Activated CD8-positive, alpha-beta T cell treated with anti-CD3 and anti-CD28 coated beads, Interleukin-2, amount 10 ng/mL, durations not matched to agents 7 days and 5 days (primary cell): ENCODE measurements at regions of chr11 and their contacts with region 1.

Region 1: GRCh38 chr11:66081505-66081904 is 11.4 kb downstream of the PACS1 start:
- DNase-seq: peak; percentile 89
- ATAC-seq: peak; percentile 94
- H3K4me3 Mint-ChIP-seq: peak overlapping the region; percentile 84
- H3K27ac Mint-ChIP-seq: peak overlapping the region; percentile 98
- H3K4me1 Mint-ChIP-seq: peaks cover 67% of the 10 kb centered on the region
- H3K27me3 Mint-ChIP-seq: no peaks in the 10 kb centered on the region

Region 2: DNA sequence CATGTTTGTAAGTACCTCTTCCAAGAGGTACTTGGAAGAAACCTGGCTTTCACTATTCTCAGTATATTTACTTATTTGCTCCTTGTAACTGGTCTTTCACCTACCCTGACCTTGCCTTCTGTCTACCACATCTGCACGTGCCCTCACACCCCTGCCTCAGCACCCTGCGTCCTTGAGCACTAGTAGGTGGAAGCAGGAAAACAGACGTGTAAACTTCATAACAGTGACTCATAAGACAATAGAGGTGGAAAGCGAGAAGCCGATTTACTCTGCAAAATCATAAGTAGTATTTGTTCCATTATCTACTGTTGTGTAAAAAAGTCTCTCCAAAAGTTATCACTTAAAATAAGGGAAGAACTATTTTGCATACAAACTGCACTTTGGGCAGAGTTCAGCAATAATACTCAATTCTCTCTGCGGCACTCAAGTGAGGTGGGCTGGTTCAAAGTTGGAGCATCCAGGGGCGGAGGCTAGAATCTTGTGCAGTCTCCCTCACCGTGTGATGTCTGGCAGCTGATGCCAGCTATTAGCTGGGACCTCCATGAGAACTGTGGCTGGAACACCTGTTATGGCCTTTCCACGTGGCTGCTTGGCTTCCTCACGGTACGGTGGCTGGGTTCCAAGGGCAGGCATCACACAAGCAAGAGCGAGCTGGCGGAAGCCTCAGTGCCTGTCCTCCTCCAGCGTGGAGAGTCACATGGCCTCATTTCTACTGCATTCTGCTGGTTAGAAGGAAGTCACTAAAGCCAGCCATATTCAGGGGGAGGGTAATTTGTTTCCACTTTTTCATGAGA is 19.0 kb after region 1 on chr11:
- CTCF ChIA-PET with region 1: interaction called, 16 read pairs
- POLR2A ChIA-PET with region 1: interaction called, 10 read pairs
- DNase-seq: peak; percentile 84
- ATAC-seq: peak; percentile 97
- H3K4me3 Mint-ChIP-seq: peak overlapping the region; percentile 77
- H3K27ac Mint-ChIP-seq: peak overlapping the region; percentile 95
- H3K4me1 Mint-ChIP-seq: peaks cover 45% of the 10 kb centered on the region
- H3K27me3 Mint-ChIP-seq: no peaks in the 10 kb centered on the region

Region 3: DNA sequence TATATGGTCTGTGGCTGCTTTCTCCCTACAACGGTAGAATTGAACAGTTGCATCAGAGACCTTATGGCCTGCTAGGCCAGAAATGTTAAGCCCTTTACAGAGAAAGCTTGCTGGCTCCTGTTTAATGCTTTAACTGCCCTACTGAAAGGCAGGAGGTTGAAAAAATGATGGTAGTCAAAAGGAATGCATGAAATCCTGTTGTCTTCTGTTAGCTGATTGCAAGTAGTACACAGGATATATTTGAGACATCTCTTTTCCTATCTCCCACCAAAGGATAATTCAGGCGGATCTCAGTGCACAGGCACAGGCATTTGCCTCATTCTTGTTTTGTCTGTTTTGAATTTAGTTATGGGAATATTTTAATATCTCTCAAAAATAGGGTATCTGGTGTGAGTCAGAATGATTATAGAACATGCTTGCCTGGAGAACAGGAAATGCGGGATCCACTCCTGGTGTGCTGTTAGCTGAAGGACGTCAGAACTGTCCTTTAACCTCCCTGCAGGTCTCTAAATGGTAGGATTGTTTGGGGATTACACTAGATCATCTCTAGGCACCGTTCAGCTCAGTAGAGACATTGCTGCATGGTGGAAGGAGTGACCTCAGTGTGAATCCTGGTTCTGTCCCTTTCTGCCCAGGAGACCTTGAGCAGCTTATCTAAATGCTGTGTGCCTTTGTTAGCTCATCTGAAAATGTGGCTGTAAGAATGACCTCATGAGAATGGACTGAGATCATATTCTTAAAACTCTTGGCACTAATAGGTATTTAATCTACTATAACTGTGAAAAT is 38.0 kb after region 1 on chr11:
- CTCF ChIA-PET with region 1: interaction called, 21 read pairs
- POLR2A ChIA-PET with region 1: interaction called, 7 read pairs
- DNase-seq: no peak
- ATAC-seq: no peak
- H3K4me3 Mint-ChIP-seq: no peak overlapping the region
- H3K27ac Mint-ChIP-seq: no peak overlapping the region
- H3K4me1 Mint-ChIP-seq: peaks cover 61% of the 10 kb centered on the region
- H3K27me3 Mint-ChIP-seq: no peaks in the 10 kb centered on the region

Region 4: GRCh38 chr11:66136752-66137123 is 55.2 kb after region 1 on chr11:
- CTCF ChIA-PET with region 1: interaction called, 23 read pairs
- POLR2A ChIA-PET with region 1: interaction called, 3 read pairs
- DNase-seq: no peak
- ATAC-seq: no peak
- H3K4me3 Mint-ChIP-seq: no peak overlapping the region
- H3K27ac Mint-ChIP-seq: no peak overlapping the region
- H3K4me1 Mint-ChIP-seq: peaks cover 34% of the 10 kb centered on the region
- H3K27me3 Mint-ChIP-seq: no peaks in the 10 kb centered on the region